Activated T-helper 2 cell treated with anti-CD3 and anti-CD28 coated beads, Interferon-gamma antibody, Interleukin-2, Interleukin-4, amounts not matched to agents 10 μg/mL and 5 μg/mL and 100 μg/mL, durations not matched to agents 14 hours and 24 hours and 36 hours (primary cell): ENCODE measurements at regions of chr7 and their contacts with region 1.

Region 1: GRCh38 chr7:152430854-152431253 is 4.9 kb downstream of the KMT2C start:
- DNase-seq: no peak
- H3K4me3 Mint-ChIP-seq: no peak overlapping the region
- H3K27ac Mint-ChIP-seq: no peak overlapping the region
- H3K4me1 Mint-ChIP-seq: peaks cover 24% of the 10 kb centered on the region
- H3K27me3 Mint-ChIP-seq: no peaks in the 10 kb centered on the region

Region 2: DNA sequence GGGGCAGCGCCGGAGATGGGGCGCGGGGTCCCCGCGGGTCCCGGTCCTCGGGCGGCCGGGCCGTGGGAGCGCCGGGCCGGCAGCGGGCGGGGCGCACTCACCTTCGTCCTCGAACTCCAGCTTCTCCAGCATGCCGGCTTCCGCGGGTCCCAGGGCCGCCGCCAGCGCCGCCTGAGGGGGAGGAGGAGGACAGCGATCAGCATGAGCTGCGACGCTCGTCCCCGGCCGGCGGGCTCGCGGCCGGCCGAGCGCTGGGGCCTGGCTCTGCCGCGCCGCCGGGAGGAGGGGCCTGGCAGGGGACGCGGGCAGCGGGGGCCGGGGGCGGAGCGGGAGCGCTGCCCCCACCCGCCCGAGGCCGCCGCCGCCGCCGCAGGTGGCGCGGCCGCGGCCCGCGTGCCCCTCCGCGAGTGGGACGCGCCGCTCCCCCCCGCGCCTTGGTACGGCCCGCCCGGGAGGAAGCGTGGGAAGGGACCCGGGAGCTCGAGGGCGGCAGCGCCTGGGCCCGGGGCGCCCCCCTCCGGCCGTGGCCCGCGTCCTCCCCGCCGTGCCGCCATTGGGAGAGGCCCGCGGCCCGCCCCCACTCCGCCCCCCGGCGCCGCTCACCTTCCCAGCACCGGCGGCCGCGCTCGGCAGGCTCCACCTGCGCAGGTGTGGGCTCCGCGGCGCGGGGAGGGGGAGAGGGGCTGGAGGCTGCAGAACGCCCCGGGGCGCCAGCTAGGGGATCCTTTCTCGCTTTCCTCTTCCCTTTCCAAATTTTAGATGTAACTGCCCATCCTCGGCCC is 798.7 kb before region 1 on chr7:
- intact Hi-C with region 1: no loop called
- DNase-seq: peak; percentile 80
- H3K4me3 Mint-ChIP-seq: peak overlapping the region; percentile 84
- H3K27ac Mint-ChIP-seq: peak overlapping the region; percentile 89
- H3K4me1 Mint-ChIP-seq: peaks cover 16% of the 10 kb centered on the region
- H3K27me3 Mint-ChIP-seq: no peaks in the 10 kb centered on the region

Region 3: GRCh38 chr7:152336754-152337368 is 94.0 kb before region 1 on chr7:
- intact Hi-C with region 1: loop called (anchors 5 kb)
- DNase-seq: no peak
- H3K4me3 Mint-ChIP-seq: no peak overlapping the region
- H3K27ac Mint-ChIP-seq: no peak overlapping the region
- H3K4me1 Mint-ChIP-seq: peaks cover 20% of the 10 kb centered on the region
- H3K27me3 Mint-ChIP-seq: no peaks in the 10 kb centered on the region